Activated B cell treated with CpG ODN at 0.5 μM for 24 hours (primary cell): ENCODE measurements at regions of chr18 and their contacts with region 1.

Region 1: GRCh38 chr18:9913526-9914333 is at the start of gene VAPA:
- DNase-seq: peak; percentile 94
- ATAC-seq: peak; percentile 81
- H3K4me3 Mint-ChIP-seq: peak within 1 kb of the TSS; percentile 93
- H3K27ac Mint-ChIP-seq: peak within 1 kb of the TSS; percentile 93
- H3K4me1 Mint-ChIP-seq: peaks cover 28% of the 10 kb centered on the region
- H3K27me3 Mint-ChIP-seq: peaks cover 6% of the 10 kb centered on the region
- CTCF ChIP-seq: no peak
- total RNA-seq, gene VAPA: 114 and 124 TPM in 2 replicates

Region 2: DNA sequence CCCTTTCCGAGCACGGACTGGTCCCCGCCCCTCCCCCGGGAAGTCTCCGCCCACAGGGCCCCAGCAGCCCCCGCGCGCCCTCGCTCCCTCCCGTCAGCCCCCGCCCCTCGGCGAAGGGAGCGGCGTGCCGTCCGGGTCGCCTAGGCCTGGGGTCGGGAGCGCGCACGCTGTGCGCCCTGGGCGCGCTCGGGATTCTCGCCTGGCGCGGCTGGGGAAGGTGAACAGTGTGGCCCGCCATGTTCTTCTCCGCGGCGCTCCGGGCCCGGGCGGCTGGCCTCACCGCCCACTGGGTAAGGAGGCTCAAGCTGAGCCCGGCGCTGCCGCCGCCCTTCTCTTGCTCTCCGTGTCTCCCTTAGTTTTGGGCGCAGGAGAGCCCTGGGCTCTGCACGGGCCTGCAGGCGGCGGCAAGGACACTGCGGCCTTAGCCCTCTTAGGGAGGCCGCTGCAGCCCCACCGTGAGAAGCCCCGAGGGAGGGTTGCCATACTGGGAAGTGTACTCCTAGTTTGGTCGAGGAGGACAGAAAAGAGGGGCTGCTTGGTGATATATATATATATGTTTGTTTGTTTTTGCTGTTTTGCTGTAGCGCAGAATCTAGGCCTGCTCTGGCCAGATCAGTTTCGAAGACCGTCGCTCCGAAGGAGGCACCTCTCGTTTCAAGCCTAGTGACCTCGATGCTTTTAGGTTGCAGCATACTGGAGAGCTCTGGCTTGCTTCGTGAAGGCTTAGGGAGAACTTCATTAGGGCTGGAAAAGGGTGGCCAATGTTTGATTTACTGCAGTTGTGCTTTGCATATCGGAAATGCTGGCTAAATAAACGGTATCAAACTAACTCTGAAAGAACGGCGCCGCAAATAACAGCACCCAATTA is 811.0 kb before region 1 on chr18 and contains the start of gene NDUFV2:
- CTCF ChIA-PET with region 1: no interaction called
- POLR2A ChIA-PET with region 1: no interaction called
- intact Hi-C with region 1: loop called (anchors 2 kb)
- DNase-seq: peak; percentile 99
- ATAC-seq: peak; percentile 96
- H3K4me3 Mint-ChIP-seq: peak within 1 kb of the TSS; percentile 94
- H3K27ac Mint-ChIP-seq: peak within 1 kb of the TSS; percentile 94
- H3K4me1 Mint-ChIP-seq: peaks cover 51% of the 10 kb centered on the region
- H3K27me3 Mint-ChIP-seq: no peaks in the 10 kb centered on the region
- CTCF ChIP-seq: no peak
- total RNA-seq, gene NDUFV2: 168 and 169 TPM in 2 replicates

Region 3: GRCh38 chr18:9474983-9475642 is 438.6 kb before region 1 on chr18 and contains the start of gene RALBP1:
- CTCF ChIA-PET with region 1: no interaction called
- POLR2A ChIA-PET with region 1: no interaction called
- intact Hi-C with region 1: loop called (anchors 1 kb)
- DNase-seq: peak; percentile 94
- ATAC-seq: peak; percentile 98
- H3K4me3 Mint-ChIP-seq: peak within 1 kb of the TSS; percentile 97
- H3K27ac Mint-ChIP-seq: peak within 1 kb of the TSS; percentile 91
- H3K4me1 Mint-ChIP-seq: peaks cover 25% of the 10 kb centered on the region
- H3K27me3 Mint-ChIP-seq: peaks cover 8% of the 10 kb centered on the region
- CTCF ChIP-seq: no peak
- total RNA-seq, gene RALBP1: 31.9 and 32.7 TPM in 2 replicates

Region 4: DNA sequence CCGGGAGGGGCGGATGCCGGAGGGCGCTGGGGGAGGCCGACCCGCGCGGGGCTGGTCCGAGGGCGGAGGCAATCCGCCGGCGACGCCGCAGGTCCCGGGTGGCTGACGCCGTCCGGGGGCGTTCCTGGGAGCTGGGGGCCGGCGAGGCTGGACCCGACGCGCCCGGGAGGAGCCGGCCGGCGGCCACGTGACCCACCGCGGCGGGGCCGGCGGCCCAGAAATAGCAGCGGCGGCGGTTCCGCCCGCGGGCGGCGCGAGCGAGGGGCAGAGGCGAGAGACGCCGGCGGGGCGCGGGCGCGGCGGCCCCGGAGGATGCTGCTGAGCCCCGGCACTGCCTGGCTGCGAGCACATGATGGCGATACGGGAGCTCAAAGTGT is 205.7 kb before region 1 on chr18 and contains the start of gene RAB31:
- CTCF ChIA-PET with region 1: no interaction called
- POLR2A ChIA-PET with region 1: interaction called, 10 read pairs
- intact Hi-C with region 1: loop called (anchors 1 kb)
- DNase-seq: peak; percentile 61
- ATAC-seq: peak; percentile 47
- H3K4me3 Mint-ChIP-seq: peak within 1 kb of the TSS; percentile 96
- H3K27ac Mint-ChIP-seq: peak within 1 kb of the TSS; percentile 95
- H3K4me1 Mint-ChIP-seq: peaks cover 54% of the 10 kb centered on the region
- H3K27me3 Mint-ChIP-seq: peaks cover 2% of the 10 kb centered on the region
- CTCF ChIP-seq: no peak
- total RNA-seq, gene RAB31: 33.0 and 36.0 TPM in 2 replicates

Region 5: DNA sequence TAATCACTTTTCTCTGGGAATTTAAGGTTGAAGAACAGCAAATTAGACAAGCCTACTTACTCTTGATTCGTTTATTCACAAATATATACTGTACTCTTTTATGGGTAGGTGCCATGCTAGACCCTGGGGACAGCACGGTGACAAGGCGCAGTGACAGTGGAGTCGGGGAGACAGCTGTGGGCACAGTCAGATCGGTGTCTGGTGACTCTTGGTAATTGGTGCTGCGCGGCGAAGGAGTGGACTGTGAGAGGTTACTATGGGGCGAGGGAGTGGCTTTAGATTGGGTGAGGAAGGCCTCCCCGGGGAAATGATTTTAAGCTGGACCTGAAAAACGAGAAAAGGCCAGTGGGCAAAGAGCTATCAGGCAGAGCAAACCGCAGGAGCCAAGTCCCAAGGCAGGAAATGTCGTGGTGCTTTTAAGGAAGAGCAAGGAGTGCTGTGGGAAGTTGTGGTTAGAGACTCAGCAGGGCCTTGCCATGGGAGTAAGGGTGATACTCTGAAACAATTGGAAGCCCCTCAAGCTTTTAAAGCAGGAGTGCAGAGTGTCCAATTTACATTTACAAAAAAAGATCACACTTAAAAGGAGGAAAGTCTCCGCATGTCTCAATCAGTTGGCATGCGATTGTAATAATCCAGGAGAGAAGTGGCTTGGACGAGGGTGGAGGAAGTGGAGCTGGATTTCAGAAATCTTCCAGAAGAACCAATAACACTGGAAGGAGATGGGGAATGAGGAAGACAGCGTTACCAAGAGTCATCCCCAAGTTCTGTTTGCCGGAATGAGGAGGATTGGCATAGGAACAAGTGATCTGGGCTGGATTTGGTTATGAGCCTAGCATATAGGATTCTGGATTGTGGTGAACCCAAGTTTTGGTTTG is 64.1 kb before region 1 on chr18:
- CTCF ChIA-PET with region 1: no interaction called
- POLR2A ChIA-PET with region 1: no interaction called
- intact Hi-C with region 1: no loop called
- DNase-seq: no peak
- ATAC-seq: no peak
- H3K4me3 Mint-ChIP-seq: no peak overlapping the region
- H3K27ac Mint-ChIP-seq: peak overlapping the region; percentile 8
- H3K4me1 Mint-ChIP-seq: peaks cover 3% of the 10 kb centered on the region
- H3K27me3 Mint-ChIP-seq: peaks cover 3% of the 10 kb centered on the region
- CTCF ChIP-seq: no peak

Region 6: GRCh38 chr18:10525371-10526210 is 611.9 kb after region 1 on chr18 and contains the start of gene NAPG:
- CTCF ChIA-PET with region 1: no interaction called
- POLR2A ChIA-PET with region 1: interaction called, 7 read pairs
- intact Hi-C with region 1: loop called (anchors 1 kb)
- DNase-seq: peak; percentile 86
- ATAC-seq: peak; percentile 91
- H3K4me3 Mint-ChIP-seq: peak within 1 kb of the TSS; percentile 99
- H3K27ac Mint-ChIP-seq: peak within 1 kb of the TSS; percentile 96
- H3K4me1 Mint-ChIP-seq: peaks cover 49% of the 10 kb centered on the region
- H3K27me3 Mint-ChIP-seq: no peaks in the 10 kb centered on the region
- CTCF ChIP-seq: no peak
- total RNA-seq, gene NAPG: 24.5 and 33.3 TPM in 2 replicates